Activated CD4-positive, alpha-beta memory T cell treated with anti-CD3 and anti-CD28 coated beads for 36 hours (primary cell): ENCODE measurements at regions of chr12 and their contacts with region 1.

Region 1: GRCh38 chr12:12356886-12357718 is at the start of gene BORCS5:
- DNase-seq: peak; percentile 99
- H3K4me3 Mint-ChIP-seq: peak within 1 kb of the TSS; percentile 98
- H3K27ac Mint-ChIP-seq: peak within 1 kb of the TSS; percentile 99
- H3K4me1 Mint-ChIP-seq: peaks cover 43% of the 10 kb centered on the region
- H3K27me3 Mint-ChIP-seq: no peaks in the 10 kb centered on the region
- total RNA-seq, gene BORCS5: 43.7 to 47.8 TPM

Region 2: GRCh38 chr12:12474931-12475795 is 118.1 kb after region 1 on chr12:
- CTCF ChIA-PET with region 1: interaction called, 5 read pairs
- POLR2A ChIA-PET with region 1: interaction called, 27 read pairs
- intact Hi-C with region 1: loop called (anchors 1 kb)
- DNase-seq: peak; percentile 86
- H3K4me3 Mint-ChIP-seq: peak overlapping the region; percentile 63
- H3K27ac Mint-ChIP-seq: peak overlapping the region; percentile 99
- H3K4me1 Mint-ChIP-seq: peaks cover 82% of the 10 kb centered on the region
- H3K27me3 Mint-ChIP-seq: no peaks in the 10 kb centered on the region

Region 3: GRCh38 chr12:12611512-12612306 is 254.6 kb after region 1 on chr12 and contains the start of gene CREBL2:
- CTCF ChIA-PET with region 1: no interaction called
- POLR2A ChIA-PET with region 1: interaction called, 7 read pairs
- intact Hi-C with region 1: loop called (anchors 5 kb)
- DNase-seq: peak; percentile 92
- H3K4me3 Mint-ChIP-seq: peak within 1 kb of the TSS; percentile 82
- H3K27ac Mint-ChIP-seq: peak within 1 kb of the TSS; percentile 95
- H3K4me1 Mint-ChIP-seq: peaks cover 54% of the 10 kb centered on the region
- H3K27me3 Mint-ChIP-seq: no peaks in the 10 kb centered on the region
- total RNA-seq, gene CREBL2: 30.4 to 32.2 TPM

Region 4: GRCh38 chr12:12716793-12717585 is 359.9 kb after region 1 on chr12 and contains the start of gene CDKN1B:
- CTCF ChIA-PET with region 1: interaction called, 3 read pairs
- POLR2A ChIA-PET with region 1: interaction called, 17 read pairs
- intact Hi-C with region 1: loop called (anchors 1 kb)
- DNase-seq: peak; percentile 92
- H3K4me3 Mint-ChIP-seq: peak within 1 kb of the TSS; percentile 98
- H3K27ac Mint-ChIP-seq: peak within 1 kb of the TSS; percentile 98
- H3K4me1 Mint-ChIP-seq: peaks cover 45% of the 10 kb centered on the region
- H3K27me3 Mint-ChIP-seq: no peaks in the 10 kb centered on the region
- total RNA-seq, gene CDKN1B: 52.4 to 52.8 TPM

Region 5: GRCh38 chr12:12803186-12803585 is 446.1 kb after region 1 on chr12:
- CTCF ChIA-PET with region 1: no interaction called
- POLR2A ChIA-PET with region 1: no interaction called
- intact Hi-C with region 1: loop called (anchors 10 kb)
- DNase-seq: peak; percentile 61
- H3K4me3 Mint-ChIP-seq: no peak overlapping the region
- H3K27ac Mint-ChIP-seq: peak overlapping the region; percentile 50
- H3K4me1 Mint-ChIP-seq: peaks cover 46% of the 10 kb centered on the region
- H3K27me3 Mint-ChIP-seq: no peaks in the 10 kb centered on the region